HCT116 (cell line): ENCODE measurements at regions of chr4 and their contacts with region 1.

Region 1: GRCh38 chr4:153785910-153786721 is 2.8 kb downstream of the SFRP2 start:
- DNase-seq: peak; percentile 26
- ATAC-seq: peak; percentile 81
- H3K4me3 ChIP-seq: no peak overlapping the region
- H3K27ac ChIP-seq: no peak overlapping the region
- H3K4me1 ChIP-seq: no peaks in the 10 kb centered on the region
- H3K27me3 ChIP-seq: peaks cover 7% of the 10 kb centered on the region; the same call in 1 of the 2 replicates
- CTCF ChIP-seq: peak; percentile 51 to 63 (median 55); a peak in 5 of 6 replicates
- POLR2A ChIP-seq: no peak
- RAD21 ChIP-seq: peak; percentile 70

Region 2: GRCh38 chr4:152485726-152486276 is 1300.3 kb before region 1 on chr4:
- CTCF ChIA-PET with region 1: no interaction called
- POLR2A ChIA-PET with region 1: no interaction called
- RAD21 ChIA-PET with region 1: no interaction called
- intact Hi-C with region 1: no loop called
- DNase-seq: no peak
- ATAC-seq: no peak
- H3K4me3 ChIP-seq: no peak overlapping the region
- H3K27ac ChIP-seq: no peak overlapping the region
- H3K4me1 ChIP-seq: no peaks in the 10 kb centered on the region
- H3K27me3 ChIP-seq: no peaks in the 10 kb centered on the region
- CTCF ChIP-seq: no peak
- POLR2A ChIP-seq: no peak
- RAD21 ChIP-seq: no peak

Region 3: GRCh38 chr4:153798420-153798819 is 12.3 kb after region 1 on chr4:
- CTCF ChIA-PET with region 1: interaction called, 11 read pairs
- POLR2A ChIA-PET with region 1: no interaction called
- RAD21 ChIA-PET with region 1: no interaction called
- intact Hi-C with region 1: no loop called
- DNase-seq: no peak
- ATAC-seq: no peak
- H3K4me3 ChIP-seq: no peak overlapping the region
- H3K27ac ChIP-seq: no peak overlapping the region
- H3K4me1 ChIP-seq: no peaks in the 10 kb centered on the region
- H3K27me3 ChIP-seq: no peaks in the 10 kb centered on the region; the same call in 1 of the 2 replicates
- CTCF ChIP-seq: no peak
- POLR2A ChIP-seq: no peak
- RAD21 ChIP-seq: no peak

Region 4: GRCh38 chr4:153890761-153891160 is 104.6 kb after region 1 on chr4:
- CTCF ChIA-PET with region 1: no interaction called
- POLR2A ChIA-PET with region 1: no interaction called
- RAD21 ChIA-PET with region 1: no interaction called
- intact Hi-C with region 1: no loop called
- DNase-seq: no peak
- ATAC-seq: no peak
- H3K4me3 ChIP-seq: no peak overlapping the region
- H3K27ac ChIP-seq: no peak overlapping the region
- H3K4me1 ChIP-seq: no peaks in the 10 kb centered on the region
- H3K27me3 ChIP-seq: no peaks in the 10 kb centered on the region
- CTCF ChIP-seq: no peak
- POLR2A ChIP-seq: no peak
- RAD21 ChIP-seq: no peak

Region 5: GRCh38 chr4:154024097-154024694 is 238.1 kb after region 1 on chr4:
- CTCF ChIA-PET with region 1: interaction called, 7 read pairs
- POLR2A ChIA-PET with region 1: no interaction called
- RAD21 ChIA-PET with region 1: interaction called in 1 of 2 experiments, 3 read pairs
- intact Hi-C with region 1: loop called (anchors 5 kb)
- DNase-seq: no peak
- ATAC-seq: peak; percentile 92
- H3K4me3 ChIP-seq: no peak overlapping the region
- H3K27ac ChIP-seq: no peak overlapping the region
- H3K4me1 ChIP-seq: no peaks in the 10 kb centered on the region
- H3K27me3 ChIP-seq: no peaks in the 10 kb centered on the region
- CTCF ChIP-seq: peak; percentile 29 to 58 (median 50); a peak in 4 of 6 replicates
- POLR2A ChIP-seq: no peak
- RAD21 ChIP-seq: peak; percentile 54

Region 6: DNA sequence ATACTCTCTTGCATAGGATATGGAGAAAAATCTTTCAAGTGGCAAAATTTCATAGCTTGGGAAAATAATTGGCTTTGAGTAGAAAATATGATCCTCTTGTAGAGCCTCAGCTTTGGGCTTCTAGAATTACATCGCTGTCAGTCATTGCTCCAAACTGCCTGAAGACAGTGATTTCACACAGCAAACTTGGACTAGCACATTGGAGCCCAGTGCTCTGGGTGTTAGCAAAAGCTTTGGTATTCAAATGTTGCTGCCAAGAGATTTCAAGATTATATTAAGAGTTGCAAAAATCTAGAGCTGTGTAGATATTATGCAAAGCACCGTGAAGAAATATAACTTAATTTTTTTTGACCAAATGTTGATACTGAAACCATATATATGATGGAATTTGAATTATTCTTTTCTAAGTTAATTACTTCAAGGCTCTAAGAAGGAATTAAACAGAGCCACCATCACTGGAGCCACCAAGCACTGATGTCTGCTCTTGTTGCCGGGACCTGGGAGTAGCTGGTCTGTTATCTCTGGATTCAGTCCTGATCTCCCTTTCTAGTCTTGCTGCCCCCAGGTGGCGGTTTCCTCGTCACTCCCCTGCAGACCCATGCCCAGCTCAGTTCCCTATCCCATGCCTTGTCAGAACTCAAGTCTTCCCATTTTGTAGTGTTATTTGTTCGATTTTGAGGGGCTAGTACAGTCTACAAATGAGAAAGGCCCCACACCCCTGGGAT is 263.5 kb after region 1 on chr4:
- CTCF ChIA-PET with region 1: interaction called, 21 read pairs
- POLR2A ChIA-PET with region 1: no interaction called
- RAD21 ChIA-PET with region 1: no interaction called
- intact Hi-C with region 1: no loop called
- DNase-seq: peak; percentile 16
- ATAC-seq: peak; percentile 79
- H3K4me3 ChIP-seq: no peak overlapping the region
- H3K27ac ChIP-seq: no peak overlapping the region
- H3K4me1 ChIP-seq: no peaks in the 10 kb centered on the region
- H3K27me3 ChIP-seq: no peaks in the 10 kb centered on the region
- CTCF ChIP-seq: peak; percentile 4 to 51 (median 35); a peak in 3 of 6 replicates
- POLR2A ChIP-seq: no peak
- RAD21 ChIP-seq: peak; percentile 25; the same call in 1 of the 2 replicates

Region 7: DNA sequence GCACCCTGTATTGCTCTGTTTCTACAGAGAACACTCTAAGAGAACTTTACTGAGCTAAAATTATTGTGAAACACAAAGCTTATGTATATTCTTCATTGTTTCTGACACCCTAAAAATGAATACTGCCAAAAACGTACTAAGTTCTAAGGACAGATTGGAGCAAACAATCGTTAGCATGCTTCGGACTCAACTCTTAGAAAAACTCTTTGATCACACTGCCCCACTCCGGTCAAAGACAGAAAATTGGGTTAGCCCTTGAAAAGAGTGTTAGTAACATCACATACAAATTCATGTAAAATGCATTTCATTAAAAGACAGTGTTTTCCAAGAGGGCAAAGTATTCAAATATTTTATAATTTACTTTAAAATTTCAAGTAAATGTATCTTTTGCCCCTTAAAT is 528.1 kb after region 1 on chr4:
- CTCF ChIA-PET with region 1: interaction called, 5 read pairs
- POLR2A ChIA-PET with region 1: no interaction called
- RAD21 ChIA-PET with region 1: no interaction called
- intact Hi-C with region 1: loop called (anchors 1 kb)
- DNase-seq: peak; percentile 37
- ATAC-seq: peak; percentile 74
- H3K4me3 ChIP-seq: no peak overlapping the region
- H3K27ac ChIP-seq: no peak overlapping the region
- H3K4me1 ChIP-seq: no peaks in the 10 kb centered on the region
- H3K27me3 ChIP-seq: no peaks in the 10 kb centered on the region
- CTCF ChIP-seq: peak; percentile 31 to 49 (median 48); a peak in 3 of 6 replicates
- POLR2A ChIP-seq: no peak
- RAD21 ChIP-seq: peak; percentile 66